ENCODE measurements at regions of chr12 and their contacts with region 1.

Region 1: GRCh38 chr12:77925536-77926108 is 94.9 kb downstream of the NAV3 start:
- DNase-seq: peak; percentile 49 to 68
- H3K4me3 ChIP-seq: no peak overlapping the region
- H3K27ac ChIP-seq: no peak overlapping the region
- H3K4me1 ChIP-seq: no peaks in the 10 kb centered on the region; a peak in 1 of 7 replicates
- H3K27me3 ChIP-seq: no peaks in the 10 kb centered on the region
- CTCF ChIP-seq: peak; percentile 89 to 98 (median 98)
- EP300 ChIP-seq: no peak
- POLR2A ChIP-seq: no peak
- RAD21 ChIP-seq: peak; percentile 97

Region 2: DNA sequence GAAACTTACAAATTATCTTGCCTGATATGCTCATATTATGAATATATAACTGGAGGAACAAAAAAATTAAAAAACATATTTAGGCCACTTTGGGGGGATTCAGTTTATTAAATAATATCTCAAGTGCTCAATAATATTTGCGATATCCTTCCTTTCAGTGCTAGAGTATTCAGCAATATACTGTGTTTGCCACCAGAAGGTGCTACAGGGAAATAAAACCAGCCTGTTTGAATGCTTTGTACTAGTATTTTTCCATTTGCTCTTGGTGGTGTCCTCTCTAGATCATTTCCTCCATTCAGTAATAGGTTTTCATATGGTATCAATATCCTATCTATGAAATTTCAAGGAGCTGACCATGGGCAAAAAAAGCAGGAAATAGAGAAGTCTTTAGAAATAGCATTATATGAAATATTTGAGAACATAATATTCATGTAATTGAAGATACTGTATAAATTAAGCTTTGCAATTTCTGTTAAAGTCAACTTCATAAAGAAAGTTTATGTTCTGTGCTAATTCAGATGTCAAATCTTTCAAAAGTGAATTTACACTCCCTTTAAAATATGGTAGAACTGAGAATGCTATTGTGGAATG is 201.2 kb before region 1 on chr12:
- CTCF ChIA-PET with region 1: interaction called, 30 read pairs
- POLR2A ChIA-PET with region 1: no interaction called
- DNase-seq: no peak
- H3K4me3 ChIP-seq: no peak overlapping the region
- H3K27ac ChIP-seq: no peak overlapping the region
- H3K4me1 ChIP-seq: no peaks in the 10 kb centered on the region
- H3K27me3 ChIP-seq: no peaks in the 10 kb centered on the region
- CTCF ChIP-seq: peak in 2 of 3 experiments; percentile 67 to 75; a peak in 3 of 4 replicates
- EP300 ChIP-seq: no peak
- POLR2A ChIP-seq: no peak
- RAD21 ChIP-seq: peak; percentile 92 to 93

Region 3: GRCh38 chr12:77782766-77783165 is 142.9 kb before region 1 on chr12:
- CTCF ChIA-PET with region 1: no interaction called
- POLR2A ChIA-PET with region 1: no interaction called
- DNase-seq: no peak
- H3K4me3 ChIP-seq: no peak overlapping the region
- H3K27ac ChIP-seq: no peak overlapping the region
- H3K4me1 ChIP-seq: peaks cover 0 to 4% (median 0%) of the 10 kb centered on the region in 4 experiments; a peak in 1 of 7 replicates
- H3K27me3 ChIP-seq: peaks cover 0 to 1% (median 0%) of the 10 kb centered on the region in 4 experiments; a peak in 1 of 7 replicates
- CTCF ChIP-seq: no peak
- EP300 ChIP-seq: no peak
- POLR2A ChIP-seq: no peak
- RAD21 ChIP-seq: no peak

Region 4: GRCh38 chr12:77914081-77914488 is 11.5 kb before region 1 on chr12:
- CTCF ChIA-PET with region 1: interaction called, 27 read pairs
- POLR2A ChIA-PET with region 1: no interaction called
- DNase-seq: no peak
- H3K4me3 ChIP-seq: no peak overlapping the region
- H3K27ac ChIP-seq: no peak overlapping the region
- H3K4me1 ChIP-seq: no peaks in the 10 kb centered on the region
- H3K27me3 ChIP-seq: no peaks in the 10 kb centered on the region
- CTCF ChIP-seq: no peak
- EP300 ChIP-seq: no peak
- POLR2A ChIP-seq: no peak
- RAD21 ChIP-seq: no peak

Measured in H1 (cell line).